ENCODE measurements at regions of chr10 and their contacts with region 1.

Region 1: GRCh38 chr10:30384701-30385201 is 35.7 kb upstream of the MTPAP start:
- DNase-seq: peak; percentile 11 to 44
- H3K4me3 ChIP-seq: no peak overlapping the region
- H3K27ac ChIP-seq: no peak overlapping the region
- H3K4me1 ChIP-seq: peaks cover 6% of the 10 kb centered on the region; the same call in 1 of the 2 replicates
- H3K27me3 ChIP-seq: no peaks in the 10 kb centered on the region
- CTCF ChIP-seq: peak; percentile 55

Region 2: DNA sequence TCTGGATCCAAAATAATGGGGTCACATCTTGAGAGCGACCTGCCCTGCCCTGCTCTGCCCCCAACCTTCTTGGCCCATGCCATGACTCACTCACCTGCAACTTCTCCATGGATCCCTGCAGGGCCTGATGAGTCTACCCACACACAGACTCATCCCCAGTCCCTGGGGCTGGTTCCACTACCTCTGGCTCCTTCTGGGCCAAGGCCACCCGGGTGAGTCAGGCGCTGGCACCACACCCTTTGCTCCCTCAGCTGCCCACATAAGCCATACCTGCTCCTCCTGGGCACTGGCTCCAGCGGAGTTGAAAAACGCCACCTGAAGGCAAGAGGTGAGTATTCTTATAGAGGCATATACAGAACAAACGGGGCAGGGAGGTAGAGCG is 19.5 kb before region 1 on chr10:
- CTCF ChIA-PET with region 1: no interaction called
- POLR2A ChIA-PET with region 1: no interaction called
- intact Hi-C with region 1: loop called (anchors 1 kb)
- DNase-seq: peak; percentile 84 to 89
- H3K4me3 ChIP-seq: no peak overlapping the region
- H3K27ac ChIP-seq: no peak overlapping the region
- H3K4me1 ChIP-seq: 0 out of 2 replicates have a peak, but pooled peaks cover 4% of the 10 kb centered on the region
- H3K27me3 ChIP-seq: no peaks in the 10 kb centered on the region
- CTCF ChIP-seq: no peak

Region 3: GRCh38 chr10:30439931-30440330 is 55.2 kb after region 1 on chr10:
- CTCF ChIA-PET with region 1: no interaction called
- POLR2A ChIA-PET with region 1: interaction called, 13 read pairs
- intact Hi-C with region 1: no loop called
- DNase-seq: peak in 1 of 2 experiments; percentile 34
- H3K4me3 ChIP-seq: no peak overlapping the region
- H3K27ac ChIP-seq: no peak overlapping the region
- H3K4me1 ChIP-seq: peaks cover 37% of the 10 kb centered on the region
- H3K27me3 ChIP-seq: no peaks in the 10 kb centered on the region
- CTCF ChIP-seq: no peak